Gastrocnemius medialis (tissue), 4 donors: ENCODE measurements at regions of chr1 and their contacts with region 1.

Region 1: DNA sequence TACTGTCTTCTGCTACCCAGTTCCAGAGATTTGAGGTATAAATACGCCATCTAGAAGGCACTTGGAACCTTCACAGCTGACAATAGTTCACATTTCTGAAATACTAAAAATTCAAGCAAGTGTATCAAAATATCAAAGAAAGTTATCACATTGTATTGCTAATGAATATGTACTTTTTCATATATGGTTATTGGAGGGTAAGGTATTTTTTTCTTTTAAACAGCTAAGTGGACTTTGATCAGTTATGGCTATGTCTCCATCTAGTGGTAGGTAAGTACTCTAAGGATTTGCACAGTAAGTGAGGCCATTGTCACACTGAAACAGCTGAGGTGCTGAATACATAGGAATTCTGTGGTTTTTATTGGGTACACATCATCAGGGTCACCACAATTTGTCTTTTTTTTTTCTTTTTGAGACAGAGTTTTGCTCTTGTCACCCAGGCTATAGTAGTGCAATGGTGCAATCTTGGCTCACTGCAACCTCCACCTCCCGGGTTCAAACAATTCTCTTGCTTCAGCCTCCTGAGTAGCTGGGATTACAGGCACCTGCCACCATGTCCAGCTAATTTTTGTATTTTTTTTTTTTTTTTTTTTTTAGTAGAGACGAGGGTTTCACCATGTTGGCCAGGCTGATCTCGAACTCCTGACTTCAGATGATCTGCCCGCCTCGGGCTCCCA is 49.1 kb upstream of the CR2 start:
- DNase-seq: no peak
- ATAC-seq: peak; percentile 82 to 87
- H3K4me3 ChIP-seq: no peak overlapping the region
- H3K27ac ChIP-seq: no peak overlapping the region
- H3K4me1 ChIP-seq: no peaks in the 10 kb centered on the region
- H3K27me3 ChIP-seq: no peaks in the 10 kb centered on the region
- CTCF ChIP-seq: peak; percentile 54 to 78 (median 73)
- POLR2A ChIP-seq: no peak

Region 2: GRCh38 chr1:206839857-206840256 is 565.1 kb before region 1 on chr1:
- in situ Hi-C with region 1: no loop called
- intact Hi-C with region 1: no loop called
- DNase-seq: no peak
- ATAC-seq: no peak
- H3K4me3 ChIP-seq: no peak overlapping the region
- H3K27ac ChIP-seq: no peak overlapping the region
- H3K4me1 ChIP-seq: no peaks in the 10 kb centered on the region
- H3K27me3 ChIP-seq: peaks cover 0 to 2% (median 0%) of the 10 kb centered on the region in 3 donors
- CTCF ChIP-seq: no peak
- POLR2A ChIP-seq: no peak

Region 3: GRCh38 chr1:207077470-207078377 is 327.3 kb before region 1 on chr1:
- in situ Hi-C with region 1: loop called in 2 of 4 experiments (anchors 10 kb)
- intact Hi-C with region 1: no loop called
- DNase-seq: peak; percentile 46 to 62
- ATAC-seq: peak; percentile 88 to 91
- H3K4me3 ChIP-seq: no peak overlapping the region
- H3K27ac ChIP-seq: peak overlapping the region; percentile 4 to 72 (median 36)
- H3K4me1 ChIP-seq: peaks cover 16 to 20% of the 10 kb centered on the region in 2 donors
- H3K27me3 ChIP-seq: no peaks in the 10 kb centered on the region
- CTCF ChIP-seq: peak; percentile 78 to 94 (median 85)
- POLR2A ChIP-seq: no peak

Region 4: GRCh38 chr1:207084701-207085180 is 320.2 kb before region 1 on chr1:
- in situ Hi-C with region 1: loop called (anchors 5 to 10 kb)
- intact Hi-C with region 1: loop called (anchors 2 kb)
- DNase-seq: peak in 1 of 2 donors; percentile 38
- ATAC-seq: peak; percentile 44 to 74
- H3K4me3 ChIP-seq: no peak overlapping the region
- H3K27ac ChIP-seq: no peak overlapping the region
- H3K4me1 ChIP-seq: peaks cover 2 to 4% of the 10 kb centered on the region in 2 donors
- H3K27me3 ChIP-seq: no peaks in the 10 kb centered on the region
- CTCF ChIP-seq: peak; percentile 44 to 63 (median 53)
- POLR2A ChIP-seq: no peak

Region 5: GRCh38 chr1:207181838-207182237 is 223.1 kb before region 1 on chr1:
- in situ Hi-C with region 1: loop called in 3 of 4 experiments (anchors 10 to 25 kb)
- intact Hi-C with region 1: loop called (anchors 1 kb)
- DNase-seq: no peak
- ATAC-seq: peak in 1 of 2 donors; percentile 36
- H3K4me3 ChIP-seq: no peak overlapping the region
- H3K27ac ChIP-seq: no peak overlapping the region
- H3K4me1 ChIP-seq: no peaks in the 10 kb centered on the region
- H3K27me3 ChIP-seq: no peaks in the 10 kb centered on the region
- CTCF ChIP-seq: peak in 4 of 5 experiments; percentile 4 to 46 (median 25)
- POLR2A ChIP-seq: no peak

Region 6: GRCh38 chr1:207259391-207259790 is 145.6 kb before region 1 on chr1:
- in situ Hi-C with region 1: loop called in 1 of 4 experiments (anchors 25 kb)
- intact Hi-C with region 1: loop called (anchors 1 kb)
- DNase-seq: no peak
- ATAC-seq: peak in 1 of 2 donors; percentile 60
- H3K4me3 ChIP-seq: no peak overlapping the region
- H3K27ac ChIP-seq: no peak overlapping the region
- H3K4me1 ChIP-seq: no peaks in the 10 kb centered on the region
- H3K27me3 ChIP-seq: no peaks in the 10 kb centered on the region
- CTCF ChIP-seq: peak in 3 of 5 experiments; percentile 20 to 44 (median 27)
- POLR2A ChIP-seq: no peak

Region 7: DNA sequence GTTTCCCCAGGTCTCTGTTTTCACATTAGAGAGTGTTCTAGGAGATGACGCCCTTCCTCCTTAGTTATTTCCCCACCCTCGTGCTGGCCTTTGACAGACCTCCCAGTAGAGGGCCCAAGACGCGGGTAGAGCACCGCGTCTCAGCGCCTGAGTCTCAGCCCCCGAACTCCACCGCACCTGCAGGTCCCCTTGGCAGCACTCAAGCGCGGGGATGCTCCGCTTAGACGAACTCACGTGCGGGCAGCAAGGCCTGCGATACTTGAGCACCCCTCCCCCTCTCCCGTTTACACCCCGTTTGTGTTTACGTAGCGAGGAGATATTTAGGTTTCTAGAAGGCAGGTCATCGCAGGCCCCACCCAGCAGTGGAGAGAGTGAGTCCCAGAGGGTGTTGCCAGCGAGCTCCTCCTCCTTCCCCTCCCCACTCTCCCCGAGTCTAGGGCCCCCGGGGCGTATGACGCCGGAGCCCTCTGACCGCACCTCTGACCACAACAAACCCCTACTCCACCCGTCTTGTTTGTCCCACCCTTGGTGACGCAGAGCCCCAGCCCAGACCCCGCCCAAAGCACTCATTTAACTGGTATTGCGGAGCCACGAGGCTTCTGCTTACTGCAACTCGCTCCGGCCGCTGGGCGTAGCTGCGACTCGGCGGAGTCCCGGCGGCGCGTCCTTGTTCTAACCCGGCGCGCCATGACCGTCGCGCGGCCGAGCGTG is 83.8 kb before region 1 on chr1 and contains the start of gene CD55:
- in situ Hi-C with region 1: no loop called
- intact Hi-C with region 1: loop called (anchors 1 kb)
- DNase-seq: peak; percentile 97 to 98
- ATAC-seq: peak; percentile 89 to 91
- H3K4me3 ChIP-seq: peak within 1 kb of the TSS; percentile 82 to 99 (median 95)
- H3K27ac ChIP-seq: peak within 1 kb of the TSS; percentile 96 to 100 (median 98)
- H3K4me1 ChIP-seq: peaks cover 17 to 22% of the 10 kb centered on the region in 2 donors
- H3K27me3 ChIP-seq: no peaks in the 10 kb centered on the region
- CTCF ChIP-seq: peak in 3 of 5 experiments; percentile 30 to 32 (median 31)
- POLR2A ChIP-seq: peak; percentile 96 to 97
- total RNA-seq, gene CD55: 75.2 to 428 (median 110) TPM

Region 8: DNA sequence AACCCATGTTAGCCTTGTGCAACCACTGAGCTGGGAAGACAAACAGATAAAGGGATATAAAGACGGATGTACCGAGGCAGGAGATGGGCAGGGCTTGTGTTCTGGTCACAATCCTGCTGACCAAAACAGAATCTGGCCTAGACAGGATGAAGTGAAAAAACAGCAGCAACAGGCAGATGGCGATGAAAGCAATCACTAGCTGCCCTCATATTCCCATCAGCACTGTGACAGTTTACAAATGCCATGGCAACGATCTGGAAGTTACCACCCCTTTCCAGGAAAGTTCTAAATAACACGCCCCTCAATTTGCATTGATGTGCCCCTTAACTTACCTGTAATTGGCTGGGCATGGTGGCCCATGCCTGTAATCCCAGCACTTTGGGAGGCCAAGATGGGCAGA is 306.3 kb after region 1 on chr1:
- in situ Hi-C with region 1: no loop called
- intact Hi-C with region 1: no loop called
- DNase-seq: no peak
- ATAC-seq: no peak
- H3K4me3 ChIP-seq: no peak overlapping the region
- H3K27ac ChIP-seq: no peak overlapping the region
- H3K4me1 ChIP-seq: no peaks in the 10 kb centered on the region
- H3K27me3 ChIP-seq: no peaks in the 10 kb centered on the region
- CTCF ChIP-seq: no peak
- POLR2A ChIP-seq: no peak